ENCODE measurements at regions of chr6 and their contacts with region 1.

Region 1: GRCh38 chr6:43910638-43911353 is 140.8 kb downstream of the VEGFA start:
- DNase-seq: peak; percentile 44
- H3K4me3 Mint-ChIP-seq: peak overlapping the region; percentile 46
- H3K27ac Mint-ChIP-seq: peak overlapping the region; percentile 95
- H3K4me1 Mint-ChIP-seq: peaks cover 66% of the 10 kb centered on the region
- H3K27me3 Mint-ChIP-seq: no peaks in the 10 kb centered on the region
- CTCF ChIP-seq: no peak

Region 2: GRCh38 chr6:42808492-42809483 is 1102.0 kb before region 1 on chr6:
- CTCF ChIA-PET with region 1: no interaction called
- intact Hi-C with region 1: no loop called
- DNase-seq: no peak
- H3K4me3 Mint-ChIP-seq: no peak overlapping the region
- H3K27ac Mint-ChIP-seq: no peak overlapping the region
- H3K4me1 Mint-ChIP-seq: no peaks in the 10 kb centered on the region
- H3K27me3 Mint-ChIP-seq: no peaks in the 10 kb centered on the region
- CTCF ChIP-seq: no peak

Region 3: DNA sequence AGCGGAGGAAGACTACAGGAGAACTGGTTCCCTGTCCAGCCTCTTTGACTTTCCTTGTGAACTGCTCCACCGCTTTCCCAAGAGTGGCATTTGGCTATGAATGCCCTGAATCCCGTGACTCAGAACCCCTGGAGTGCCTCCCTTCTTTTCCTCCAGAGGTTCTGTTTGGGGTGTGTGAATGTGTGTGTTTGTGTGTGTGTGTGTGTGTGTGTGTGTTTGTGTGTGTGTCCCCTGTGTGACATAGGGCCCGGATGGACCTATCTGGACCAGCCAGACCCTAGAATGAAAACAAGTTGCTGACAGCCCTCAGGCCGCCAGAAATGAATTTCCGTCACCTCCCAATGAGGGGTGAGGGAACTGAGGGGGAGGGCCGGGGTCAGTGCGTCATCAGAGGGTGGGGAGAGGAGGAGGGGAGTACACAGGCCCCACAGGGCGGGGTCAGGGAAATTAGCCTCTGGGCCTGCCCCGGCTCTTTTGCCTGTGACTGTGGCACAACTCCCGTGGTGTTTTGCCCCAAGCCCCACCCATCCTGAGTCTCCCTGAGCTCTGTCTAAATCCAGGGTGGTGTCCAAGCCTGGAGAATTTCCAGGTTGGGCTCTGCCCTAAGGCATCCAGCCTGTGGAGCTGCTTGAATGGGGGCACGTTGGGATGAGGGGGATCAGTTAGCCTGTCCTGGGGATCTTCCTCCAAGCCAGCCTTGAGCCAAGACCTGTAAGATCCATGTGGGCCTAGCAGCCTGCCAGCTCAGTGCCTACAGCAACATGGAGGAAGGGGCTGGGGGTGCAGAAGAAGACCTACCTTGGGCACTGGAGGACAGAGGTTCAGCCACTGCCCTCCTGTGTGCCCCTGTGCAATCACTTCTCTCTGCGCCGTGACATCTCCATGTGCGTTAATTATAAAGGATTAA is 208.0 kb before region 1 on chr6:
- CTCF ChIA-PET with region 1: no interaction called
- intact Hi-C with region 1: no loop called
- DNase-seq: peak; percentile 98
- H3K4me3 Mint-ChIP-seq: peak overlapping the region; percentile 17
- H3K27ac Mint-ChIP-seq: peak overlapping the region; percentile 58
- H3K4me1 Mint-ChIP-seq: peaks cover 73% of the 10 kb centered on the region
- H3K27me3 Mint-ChIP-seq: no peaks in the 10 kb centered on the region
- CTCF ChIP-seq: no peak

Region 4: GRCh38 chr6:43856005-43856765 is 54.6 kb before region 1 on chr6:
- CTCF ChIA-PET with region 1: interaction called, 11 read pairs
- intact Hi-C with region 1: loop called (anchors 2 kb)
- DNase-seq: peak; percentile 86
- H3K4me3 Mint-ChIP-seq: no peak overlapping the region
- H3K27ac Mint-ChIP-seq: peak overlapping the region; percentile 72
- H3K4me1 Mint-ChIP-seq: peaks cover 63% of the 10 kb centered on the region
- H3K27me3 Mint-ChIP-seq: no peaks in the 10 kb centered on the region
- CTCF ChIP-seq: peak; percentile 94

Measured in Calu3 (cell line).